ENCODE measurements at regions of chr4 and their contacts with region 1.

Region 1: DNA sequence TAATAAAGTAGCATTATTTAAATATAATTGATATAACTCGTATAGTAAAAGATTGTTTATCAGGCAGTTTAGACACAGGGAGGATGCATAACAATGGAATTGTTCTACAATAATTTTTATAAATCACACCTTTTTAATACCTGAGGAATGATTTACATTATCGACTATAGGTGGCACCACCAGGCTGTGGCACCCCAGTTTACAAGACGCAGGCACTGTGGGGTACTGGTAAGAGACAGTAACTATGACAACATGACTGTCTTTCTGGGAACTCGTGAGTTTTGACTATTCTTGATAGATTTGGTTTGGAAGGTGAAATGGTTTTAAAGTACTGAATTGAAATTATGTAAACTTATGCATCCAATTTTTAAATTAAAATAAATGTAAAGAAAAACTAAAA is 27.1 kb upstream of the STBD1 start:
- DNase-seq: peak in 6 of 9 experiments; percentile 2 to 55 (median 30)
- ATAC-seq: peak; percentile 49
- H3K4me3 ChIP-seq: no peak overlapping the region
- H3K4me3 Mint-ChIP-seq: no peak overlapping the region
- H3K27ac ChIP-seq: no peak overlapping the region
- H3K27ac Mint-ChIP-seq: no peak overlapping the region
- H3K4me1 ChIP-seq: no peaks in the 10 kb centered on the region
- H3K4me1 Mint-ChIP-seq: no peaks in the 10 kb centered on the region
- H3K27me3 ChIP-seq: peaks cover 0 to 5% of the 10 kb centered on the region in 2 experiments
- H3K27me3 Mint-ChIP-seq: peaks cover 10% of the 10 kb centered on the region
- CTCF ChIP-seq: peak; percentile 18

Region 2: DNA sequence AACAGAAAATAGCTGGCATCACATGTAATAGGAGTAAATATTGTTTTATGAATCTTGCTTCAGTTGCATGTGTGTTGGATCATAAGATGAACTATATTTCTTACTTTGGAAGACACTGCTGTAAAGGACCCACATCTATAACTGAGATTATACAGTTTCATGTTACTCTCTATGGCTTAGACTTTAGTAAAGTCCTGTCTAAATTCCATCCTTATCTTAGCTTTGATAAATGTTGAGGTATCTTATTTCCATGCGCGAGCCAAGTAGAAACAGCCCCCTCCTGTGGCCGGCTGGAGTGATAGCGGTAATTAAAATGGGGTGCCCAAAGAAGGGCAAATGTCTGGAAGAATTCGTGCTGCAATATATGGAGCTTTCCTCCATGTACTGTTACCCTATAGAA is 98.4 kb after region 1 on chr4:
- CTCF ChIA-PET with region 1: interaction called, 98 read pairs
- POLR2A ChIA-PET with region 1: interaction called, 7 read pairs
- intact Hi-C with region 1: loop called in 1 of 2 experiments (anchors 5 kb)
- DNase-seq: peak; percentile 11 to 62 (median 37)
- ATAC-seq: peak; percentile 49
- H3K4me3 ChIP-seq: no peak overlapping the region
- H3K4me3 Mint-ChIP-seq: no peak overlapping the region
- H3K27ac ChIP-seq: no peak overlapping the region
- H3K27ac Mint-ChIP-seq: no peak overlapping the region
- H3K4me1 ChIP-seq: no peaks in the 10 kb centered on the region
- H3K4me1 Mint-ChIP-seq: no peaks in the 10 kb centered on the region
- H3K27me3 ChIP-seq: no peaks in the 10 kb centered on the region
- H3K27me3 Mint-ChIP-seq: no peaks in the 10 kb centered on the region
- CTCF ChIP-seq: peak; percentile 60

Region 3: DNA sequence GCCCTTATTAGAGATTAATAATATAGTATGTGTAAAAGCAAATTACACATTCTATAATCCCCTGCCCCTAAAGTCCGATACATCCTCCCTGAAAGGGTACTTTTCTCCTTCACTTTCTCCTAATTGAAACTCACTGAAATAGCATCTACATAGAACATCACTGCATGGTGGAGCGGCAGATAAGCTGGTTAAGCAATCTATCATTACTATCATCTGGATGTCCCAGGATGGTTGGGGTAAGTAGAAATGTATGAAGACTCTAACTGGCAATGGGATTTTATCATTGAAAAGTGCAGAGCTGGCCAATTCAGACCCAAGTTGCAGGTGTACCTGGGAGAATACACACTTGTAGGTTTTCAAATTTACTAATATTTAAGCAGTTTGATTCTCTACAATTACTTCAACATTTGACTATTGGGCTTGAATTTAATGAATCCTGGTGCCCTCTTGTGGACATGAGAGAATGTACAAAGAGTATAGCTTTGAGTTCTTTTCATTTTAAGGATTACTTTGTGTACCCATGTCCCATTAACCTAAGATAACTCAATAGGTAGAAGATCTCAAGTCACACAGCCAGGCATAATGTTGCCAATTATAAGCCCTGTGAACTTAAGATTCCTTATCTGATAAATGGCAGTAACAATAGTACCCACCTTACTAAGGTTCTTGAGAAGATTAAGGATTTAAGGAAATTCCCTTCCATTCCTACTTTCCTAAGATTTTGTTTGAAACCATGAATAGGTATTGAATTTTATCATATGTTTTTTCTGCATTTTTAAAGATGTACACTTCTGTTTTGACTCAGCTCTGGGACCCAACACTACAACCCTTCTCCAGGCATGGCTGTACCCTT is 225.4 kb after region 1 on chr4:
- CTCF ChIA-PET with region 1: interaction called, 20 read pairs
- POLR2A ChIA-PET with region 1: no interaction called
- intact Hi-C with region 1: loop called (anchors 1 to 5 kb)
- DNase-seq: peak in 2 of 9 experiments; percentile 48 to 57
- ATAC-seq: no peak
- H3K4me3 ChIP-seq: no peak overlapping the region
- H3K4me3 Mint-ChIP-seq: no peak overlapping the region
- H3K27ac ChIP-seq: no peak overlapping the region
- H3K27ac Mint-ChIP-seq: no peak overlapping the region
- H3K4me1 ChIP-seq: no peaks in the 10 kb centered on the region
- H3K4me1 Mint-ChIP-seq: no peaks in the 10 kb centered on the region
- H3K27me3 ChIP-seq: no peaks in the 10 kb centered on the region
- H3K27me3 Mint-ChIP-seq: peaks cover 16% of the 10 kb centered on the region
- CTCF ChIP-seq: peak; percentile 55

Region 4: GRCh38 chr4:76758290-76758882 is 478.9 kb after region 1 on chr4:
- CTCF ChIA-PET with region 1: no interaction called
- POLR2A ChIA-PET with region 1: no interaction called
- intact Hi-C with region 1: loop called in 1 of 2 experiments (anchors 10 kb)
- DNase-seq: peak in 2 of 9 experiments; percentile 17 to 26
- ATAC-seq: no peak
- H3K4me3 ChIP-seq: no peak overlapping the region
- H3K4me3 Mint-ChIP-seq: no peak overlapping the region
- H3K27ac ChIP-seq: no peak overlapping the region
- H3K27ac Mint-ChIP-seq: no peak overlapping the region
- H3K4me1 ChIP-seq: no peaks in the 10 kb centered on the region
- H3K4me1 Mint-ChIP-seq: no peaks in the 10 kb centered on the region
- H3K27me3 ChIP-seq: no peaks in the 10 kb centered on the region
- H3K27me3 Mint-ChIP-seq: peaks cover 4% of the 10 kb centered on the region
- CTCF ChIP-seq: peak; percentile 54

Measured in CD8-positive, alpha-beta T cell (primary cell).